ENCODE measurements at regions of chr13 and their contacts with region 1.

Region 1: DNA sequence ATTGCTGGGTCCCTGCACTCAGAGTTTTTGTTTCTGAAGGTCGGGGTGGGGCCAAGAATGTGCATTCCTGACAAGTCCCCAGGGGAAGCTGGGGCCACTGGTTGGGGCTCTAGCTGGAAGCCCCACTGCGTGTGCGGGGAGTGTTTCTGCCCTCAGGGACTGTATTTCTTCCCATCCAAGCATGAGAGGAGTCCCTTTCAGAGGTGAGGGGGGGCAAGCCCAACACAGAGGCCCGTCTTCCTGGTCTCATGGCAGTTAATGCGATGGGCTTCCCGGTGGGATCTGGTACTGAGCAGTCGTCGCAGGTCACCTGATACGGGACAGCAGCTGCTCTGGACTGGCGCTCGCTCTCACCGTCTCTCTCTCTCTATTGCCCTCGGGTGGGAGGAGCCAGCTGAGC is 50.4 kb downstream of the GPR12 start:
- DNase-seq: no peak
- H3K4me3 ChIP-seq: no peak overlapping the region
- CTCF ChIP-seq: no peak
- POLR2A ChIP-seq: no peak

Region 2: DNA sequence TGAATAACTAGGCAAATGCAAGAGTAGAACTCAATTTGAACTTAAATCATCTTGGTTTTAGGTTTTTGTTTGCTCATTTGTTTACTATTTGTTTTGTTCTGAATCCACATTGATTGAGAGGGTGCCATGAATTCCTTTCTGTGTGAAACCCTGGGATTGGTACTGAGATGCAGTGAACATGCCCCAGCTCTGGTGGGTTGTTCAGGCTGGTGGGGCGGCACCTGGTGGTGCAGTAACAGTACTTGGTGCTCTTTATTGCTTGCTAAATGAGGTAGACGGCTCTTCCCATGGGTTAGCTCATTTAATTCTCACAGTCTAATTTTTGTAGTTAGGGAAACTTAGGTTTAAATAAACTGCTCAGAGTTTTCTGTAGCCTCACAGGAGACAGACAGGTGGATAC is 104.3 kb before region 1 on chr13:
- intact Hi-C with region 1: no loop called
- DNase-seq: no peak
- H3K4me3 ChIP-seq: no peak overlapping the region
- CTCF ChIP-seq: no peak
- POLR2A ChIP-seq: no peak

Region 3: DNA sequence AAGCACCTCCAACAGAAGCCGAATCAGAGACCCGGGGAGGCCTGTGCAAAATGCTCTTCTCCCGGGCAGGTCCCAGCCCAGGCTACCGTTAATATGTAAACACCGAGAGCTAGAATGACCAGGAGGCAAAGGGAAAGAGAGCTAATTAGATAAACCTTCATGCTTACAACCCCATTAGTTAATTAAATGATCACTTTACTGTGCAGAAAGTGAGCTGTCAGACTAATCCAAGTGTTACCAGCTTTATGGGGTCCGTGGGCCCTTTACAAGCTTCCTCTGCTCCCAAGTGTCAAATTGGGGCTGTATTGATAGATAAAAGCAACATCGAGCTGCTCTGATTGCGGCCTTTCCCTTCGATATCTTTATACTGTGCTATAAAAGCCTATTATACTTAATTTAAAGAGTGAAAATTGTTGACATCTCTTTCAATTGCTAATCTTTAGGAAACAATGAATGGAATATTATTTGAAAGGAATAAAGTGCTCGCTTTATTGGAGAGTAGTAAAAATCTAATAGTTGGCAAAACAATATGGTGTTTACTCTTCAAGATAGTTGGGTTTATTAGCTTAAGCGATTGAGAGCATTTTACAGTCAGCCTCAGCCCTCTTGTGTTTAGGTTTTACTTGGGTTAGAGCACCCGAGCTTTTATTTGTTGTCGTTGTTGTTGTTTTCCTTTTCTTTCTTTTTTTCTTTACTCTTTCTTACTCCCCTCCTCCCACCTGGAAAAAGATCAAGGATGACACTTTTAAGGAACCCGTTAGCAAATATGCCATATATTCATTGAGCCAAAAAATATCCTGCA is 239.7 kb after region 1 on chr13:
- intact Hi-C with region 1: loop called (anchors 2 kb)
- DNase-seq: no peak
- H3K4me3 ChIP-seq: no peak overlapping the region
- CTCF ChIP-seq: no peak
- POLR2A ChIP-seq: no peak

Measured in lower leg skin (tissue), 4 donors.